Activated naive CD4-positive, alpha-beta T cell treated with anti-CD3 and anti-CD28 coated beads for 36 hours (primary cell): ENCODE measurements at regions of chr10 and their contacts with region 1.

Region 1: DNA sequence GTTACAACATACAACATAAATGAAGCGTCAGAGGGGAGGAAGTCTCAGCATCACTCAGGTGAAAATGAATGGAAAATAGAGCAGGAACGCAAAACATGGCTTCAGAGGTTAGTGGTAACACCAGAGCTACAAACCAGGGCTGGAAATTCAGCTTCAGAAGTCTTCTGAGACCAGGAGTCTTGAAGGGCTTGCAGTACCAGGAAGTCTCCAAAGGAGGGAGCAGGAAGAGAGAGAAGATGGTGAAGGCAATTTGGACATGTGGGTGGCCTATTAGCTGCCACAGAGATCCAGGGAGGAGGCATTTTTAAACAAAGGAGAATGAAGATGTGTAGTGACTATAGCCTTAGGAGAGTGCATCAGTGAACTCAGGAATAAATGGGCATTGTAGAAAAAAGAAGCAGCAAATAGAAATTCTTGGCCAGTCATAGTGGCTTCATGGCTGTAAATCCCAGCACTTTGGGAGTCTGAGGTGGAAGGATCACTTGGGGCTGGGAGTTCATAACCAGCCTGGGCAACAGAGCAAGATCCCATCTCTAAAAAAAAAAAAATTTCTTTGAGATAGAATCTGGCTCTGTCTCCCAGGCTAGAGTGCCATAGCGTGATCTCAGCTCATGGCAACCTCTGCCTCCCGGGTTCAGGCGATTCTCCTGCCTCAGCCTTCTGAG is 9.3 kb upstream of the TET1 start:
- DNase-seq: peak; percentile 69
- H3K4me3 Mint-ChIP-seq: no peak overlapping the region
- H3K27ac Mint-ChIP-seq: no peak overlapping the region
- H3K4me1 Mint-ChIP-seq: no peaks in the 10 kb centered on the region
- H3K27me3 Mint-ChIP-seq: no peaks in the 10 kb centered on the region

Region 2: DNA sequence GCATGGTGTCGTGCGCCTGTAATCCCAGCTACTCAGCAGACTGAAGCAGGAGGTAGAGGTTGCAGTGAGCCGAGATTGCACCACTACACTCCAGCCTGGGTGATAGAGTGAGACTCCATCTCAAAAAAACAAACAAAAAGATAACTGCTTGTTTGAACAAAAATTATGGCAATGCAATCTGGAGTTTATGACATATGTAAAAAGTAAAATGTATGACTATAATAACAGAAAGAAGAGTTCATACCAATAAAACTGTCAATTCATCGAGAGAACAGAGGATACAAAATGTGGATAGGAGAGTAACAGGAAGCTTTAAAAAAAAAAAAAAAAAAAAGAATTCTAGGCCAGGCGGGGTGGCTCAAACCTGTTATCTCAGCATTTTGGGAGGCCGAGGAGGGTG is 42.8 kb before region 1 on chr10:
- CTCF ChIA-PET with region 1: no interaction called
- intact Hi-C with region 1: no loop called
- DNase-seq: no peak
- H3K4me3 Mint-ChIP-seq: no peak overlapping the region
- H3K27ac Mint-ChIP-seq: no peak overlapping the region
- H3K4me1 Mint-ChIP-seq: no peaks in the 10 kb centered on the region
- H3K27me3 Mint-ChIP-seq: no peaks in the 10 kb centered on the region

Region 3: GRCh38 chr10:68826764-68827591 is 276.1 kb after region 1 on chr10 and contains the start of gene STOX1:
- CTCF ChIA-PET with region 1: interaction called, 3 read pairs
- intact Hi-C with region 1: loop called (anchors 5 kb)
- DNase-seq: peak; percentile 56
- H3K4me3 Mint-ChIP-seq: peak within 1 kb of the TSS; percentile 75
- H3K27ac Mint-ChIP-seq: no peak within 1 kb of the TSS
- H3K4me1 Mint-ChIP-seq: peaks cover 13% of the 10 kb centered on the region
- H3K27me3 Mint-ChIP-seq: peaks cover 2% of the 10 kb centered on the region
- total RNA-seq, gene STOX1: 0.38 to 0.42 TPM